Mucosa of descending colon (tissue), 3 donors: ENCODE measurements at regions of chr6 and their contacts with region 1.

Region 1: DNA sequence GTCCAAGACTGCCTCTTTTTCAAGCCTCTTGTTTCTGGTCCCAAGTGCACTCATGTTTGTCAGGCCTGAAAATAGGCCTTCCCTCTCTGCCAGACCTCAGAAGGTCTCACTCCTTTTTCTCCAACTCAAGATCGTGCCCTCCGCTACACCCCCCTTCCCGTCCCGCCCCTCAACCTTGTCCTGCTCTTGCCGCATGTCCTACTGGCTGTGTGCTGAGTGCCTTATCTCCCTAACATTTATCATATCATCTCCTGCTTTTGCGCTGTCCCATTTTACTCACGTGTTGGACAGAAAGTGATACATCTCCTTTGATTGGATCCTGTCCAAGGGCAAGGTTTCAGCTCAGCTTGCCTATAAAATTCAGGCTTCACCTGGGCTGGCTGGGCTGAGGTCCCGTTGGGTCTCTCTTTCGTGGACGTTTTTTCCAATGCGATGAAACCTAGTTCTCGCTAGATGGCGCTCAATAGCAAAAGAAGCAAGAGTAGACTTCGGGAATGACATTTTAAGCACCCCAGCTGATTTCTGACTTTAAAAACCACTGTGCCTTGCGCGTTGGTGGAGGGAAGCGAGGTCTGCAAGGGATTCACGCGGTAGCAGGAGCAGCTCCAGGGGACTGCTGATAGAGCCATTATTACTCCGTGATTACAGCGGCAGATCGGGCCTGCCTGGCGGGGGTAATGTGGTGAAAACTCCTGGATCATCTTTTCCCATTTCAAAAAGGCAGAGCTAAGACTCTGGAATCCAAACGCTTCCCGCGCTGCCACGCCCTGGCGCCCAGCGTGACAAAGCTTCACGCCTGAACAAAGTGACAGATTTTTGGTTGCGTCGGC is 137.6 kb downstream of the IMPG1 start:
- DNase-seq: peak in 1 of 3 donors; percentile 47
- ATAC-seq: peak; percentile 75
- H3K4me3 ChIP-seq: no peak overlapping the region
- H3K4me1 ChIP-seq: no peaks in the 10 kb centered on the region
- CTCF ChIP-seq: peak; percentile 50

Region 2: GRCh38 chr6:76174722-76175121 is 239.9 kb after region 1 on chr6:
- intact Hi-C with region 1: no loop called
- DNase-seq: no peak
- ATAC-seq: no peak
- H3K4me3 ChIP-seq: no peak overlapping the region
- H3K4me1 ChIP-seq: no peaks in the 10 kb centered on the region
- CTCF ChIP-seq: no peak

Region 3: GRCh38 chr6:77457720-77458349 is 1523.0 kb after region 1 on chr6:
- intact Hi-C with region 1: loop called in 1 of 2 experiments (anchors 10 kb)
- DNase-seq: peak in 2 of 3 donors; percentile 26 to 80
- ATAC-seq: peak; percentile 66
- H3K4me3 ChIP-seq: no peak overlapping the region
- H3K4me1 ChIP-seq: peaks cover 2% of the 10 kb centered on the region
- CTCF ChIP-seq: peak; percentile 47